Heart left ventricle (tissue), 16 donors: ENCODE measurements at regions of chr5 and their contacts with region 1.

Region 1: DNA sequence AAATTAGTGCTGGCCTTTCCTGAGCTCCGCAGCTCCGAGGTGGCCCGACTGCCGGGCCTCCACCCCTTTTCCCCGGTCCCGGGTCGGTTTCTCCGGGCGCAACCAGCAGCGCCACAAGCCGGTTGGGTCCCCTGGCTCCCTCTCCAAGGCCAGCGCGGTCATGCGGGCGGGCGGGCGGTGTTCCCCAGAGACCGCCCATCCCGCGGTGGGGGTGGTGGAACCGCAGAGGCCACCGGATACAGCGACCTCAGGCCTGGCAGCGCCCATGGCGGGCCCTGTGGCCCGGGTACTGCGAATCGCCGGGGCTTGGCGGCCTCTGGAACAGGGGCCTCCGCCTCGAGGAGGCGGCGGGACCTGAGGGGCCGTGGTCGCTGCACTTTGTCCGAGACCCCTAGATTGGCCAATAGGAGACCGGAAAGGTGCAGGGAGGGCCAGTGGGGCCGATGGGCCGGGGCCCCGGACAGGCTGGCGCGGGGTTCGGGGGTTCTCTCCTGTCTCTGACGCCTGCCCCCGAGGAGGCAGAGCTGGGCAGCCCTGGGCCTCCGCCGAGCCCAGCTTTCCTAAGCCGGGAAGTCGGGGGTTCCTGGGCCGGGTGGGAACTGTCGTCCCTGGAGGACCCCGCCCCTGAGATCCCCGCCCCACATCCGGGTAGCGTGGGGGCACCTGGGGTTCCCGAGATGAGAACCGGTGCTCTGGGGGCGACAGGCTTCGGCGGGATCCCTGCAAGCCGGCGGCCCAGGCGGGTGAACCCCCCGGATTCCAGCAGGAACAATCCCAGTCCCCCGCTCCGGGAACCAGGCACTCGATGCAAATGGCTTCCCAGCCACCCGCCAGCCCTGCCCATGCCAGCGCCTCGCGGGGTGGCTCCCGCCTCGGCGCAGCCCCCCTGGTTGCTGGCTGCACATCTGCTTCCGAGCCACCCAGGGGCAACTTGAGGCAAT is 293.9 kb downstream of the ZSWIM6 start:
- DNase-seq: peak; percentile 79 to 91 (median 87)
- ATAC-seq: peak; percentile 94 to 98 (median 98)
- H3K4me3 ChIP-seq: peak overlapping the region; percentile 35 to 74 (median 64)
- H3K27ac ChIP-seq: peak overlapping the region; percentile 61 to 96 (median 90)
- H3K4me1 ChIP-seq: peaks cover 0 to 30% (median 15%) of the 10 kb centered on the region in 12 donors
- H3K27me3 ChIP-seq: no peaks in the 10 kb centered on the region
- CTCF ChIP-seq: peak in 2 of 12 donors; percentile 13 to 15
- POLR2A ChIP-seq: peak in 1 of 2 donors; percentile 43

Region 2: GRCh38 chr5:61408476-61409168 is 217.3 kb before region 1 on chr5:
- intact Hi-C with region 1: loop called in 2 of 10 experiments (anchors 2 to 5 kb)
- DNase-seq: peak; percentile 99 to 100 (median 100)
- ATAC-seq: peak; percentile 100
- H3K4me3 ChIP-seq: peak overlapping the region in 9 of 12 donors; percentile 6 to 50 (median 33)
- H3K27ac ChIP-seq: peak overlapping the region in 9 of 12 donors; percentile 4 to 74 (median 36)
- H3K4me1 ChIP-seq: peaks cover 3 to 38% (median 19%) of the 10 kb centered on the region in 12 donors
- H3K27me3 ChIP-seq: no peaks in the 10 kb centered on the region
- CTCF ChIP-seq: peak in 1 of 12 donors; percentile 9
- POLR2A ChIP-seq: peak in 1 of 2 donors; percentile 14